CD4-positive, alpha-beta T cell (primary cell): ENCODE measurements at regions of chr5 and their contacts with region 1.

Region 1: GRCh38 chr5:126776497-126777256 is at the start of gene LMNB1:
- DNase-seq: peak; percentile 87 to 97 (median 92)
- ATAC-seq: peak; percentile 66
- H3K4me3 ChIP-seq: peak within 1 kb of the TSS; percentile 97
- H3K4me3 Mint-ChIP-seq: peak within 1 kb of the TSS; percentile 87
- H3K27ac ChIP-seq: peak within 1 kb of the TSS; percentile 77 to 96
- H3K27ac Mint-ChIP-seq: peak within 1 kb of the TSS; percentile 93
- H3K4me1 ChIP-seq: peaks cover 28% of the 10 kb centered on the region
- H3K4me1 Mint-ChIP-seq: peaks cover 23% of the 10 kb centered on the region
- H3K27me3 ChIP-seq: no peaks in the 10 kb centered on the region
- H3K27me3 Mint-ChIP-seq: no peaks in the 10 kb centered on the region
- CTCF ChIP-seq: peak; percentile 16
- total RNA-seq, gene LMNB1: 30.6 to 31.1 TPM

Region 2: DNA sequence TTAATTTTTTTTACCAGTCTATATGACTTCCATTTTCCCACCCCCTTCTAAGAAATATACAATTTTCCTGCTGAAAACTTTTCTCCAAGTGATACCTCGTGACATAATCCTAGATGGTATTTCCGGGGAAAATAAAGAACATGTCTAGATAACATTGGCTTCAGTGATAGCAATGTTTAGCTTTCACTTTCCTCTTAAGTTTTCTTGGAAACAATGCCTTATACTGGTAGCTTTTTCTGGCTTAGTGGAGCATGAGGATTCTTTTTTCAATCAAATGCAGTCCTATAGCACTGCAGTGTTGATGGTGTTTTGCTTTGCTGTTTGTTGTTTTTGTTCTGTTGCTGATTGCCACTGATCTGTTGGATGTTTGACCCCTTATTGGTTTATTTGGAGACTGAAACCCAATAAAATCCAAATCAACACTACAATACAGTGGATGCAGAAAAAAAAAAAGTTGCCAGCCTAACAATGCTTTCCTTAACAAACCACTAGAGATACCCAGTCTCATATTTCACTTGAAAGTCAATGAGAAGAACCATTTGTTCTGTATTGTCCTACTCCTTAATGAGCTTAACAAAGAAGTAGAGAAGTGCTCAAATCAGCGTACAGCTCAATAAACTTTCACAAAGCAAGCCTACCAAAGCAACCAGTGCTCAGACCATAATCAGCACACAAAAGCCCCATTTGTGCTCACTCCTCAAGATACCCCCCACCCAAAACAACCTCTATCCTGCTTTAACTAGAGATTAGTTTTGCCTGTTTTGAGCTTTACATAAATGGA is 427.6 kb before region 1 on chr5:
- CTCF ChIA-PET with region 1: no interaction called
- POLR2A ChIA-PET with region 1: interaction called, 4 read pairs
- intact Hi-C with region 1: loop called in 1 of 2 experiments (anchors 10 kb)
- DNase-seq: no peak
- ATAC-seq: no peak
- H3K4me3 ChIP-seq: no peak overlapping the region
- H3K4me3 Mint-ChIP-seq: no peak overlapping the region
- H3K27ac ChIP-seq: no peak overlapping the region
- H3K27ac Mint-ChIP-seq: no peak overlapping the region
- H3K4me1 ChIP-seq: peaks cover under 1% of the 10 kb centered on the region
- H3K4me1 Mint-ChIP-seq: peaks cover 3% of the 10 kb centered on the region
- H3K27me3 ChIP-seq: peaks cover 0 to 24% of the 10 kb centered on the region in 2 experiments
- H3K27me3 Mint-ChIP-seq: peaks cover 37% of the 10 kb centered on the region
- CTCF ChIP-seq: no peak

Region 3: DNA sequence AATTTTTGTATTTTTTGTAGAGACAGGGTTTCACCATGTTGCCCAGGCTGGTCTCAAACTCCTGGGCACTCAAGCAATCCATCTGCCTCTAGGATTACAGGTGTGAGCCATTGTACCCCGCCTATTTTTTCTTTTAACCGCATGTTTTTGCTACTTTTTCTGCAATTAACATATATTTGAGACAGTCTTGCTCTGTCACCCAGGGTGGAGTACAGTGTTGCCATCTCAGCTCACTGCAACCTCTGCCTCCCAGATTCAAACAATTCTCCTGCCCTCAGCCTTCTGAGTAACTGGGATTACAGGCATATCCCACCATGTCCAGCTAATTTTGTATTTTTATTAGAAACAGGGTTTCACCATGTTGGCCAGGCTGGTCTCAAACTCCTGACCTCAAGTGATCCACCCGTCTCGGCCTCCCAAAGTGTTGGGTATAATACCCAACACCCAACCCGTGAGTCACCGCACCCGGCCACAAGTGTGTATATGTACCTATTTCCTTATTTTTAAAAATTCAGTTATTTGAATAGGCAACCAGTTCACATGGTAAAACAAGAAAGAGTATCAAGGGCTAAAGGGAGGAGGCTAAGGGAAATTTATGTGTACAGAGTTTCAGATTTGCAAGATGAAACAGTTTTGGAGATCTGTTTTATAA is 162.6 kb before region 1 on chr5:
- CTCF ChIA-PET with region 1: no interaction called
- POLR2A ChIA-PET with region 1: no interaction called
- intact Hi-C with region 1: loop called in 1 of 2 experiments (anchors 5 kb)
- DNase-seq: no peak
- ATAC-seq: no peak
- H3K4me3 ChIP-seq: no peak overlapping the region
- H3K4me3 Mint-ChIP-seq: no peak overlapping the region
- H3K27ac ChIP-seq: no peak overlapping the region
- H3K27ac Mint-ChIP-seq: no peak overlapping the region
- H3K4me1 ChIP-seq: no peaks in the 10 kb centered on the region
- H3K4me1 Mint-ChIP-seq: peaks cover 31% of the 10 kb centered on the region
- H3K27me3 ChIP-seq: no peaks in the 10 kb centered on the region
- H3K27me3 Mint-ChIP-seq: no peaks in the 10 kb centered on the region
- CTCF ChIP-seq: no peak

Region 4: GRCh38 chr5:126745259-126745992 is 31.3 kb before region 1 on chr5:
- CTCF ChIA-PET with region 1: interaction called, 5 read pairs
- POLR2A ChIA-PET with region 1: interaction called, 23 read pairs
- intact Hi-C with region 1: loop called in 1 of 2 experiments (anchors 1 kb)
- DNase-seq: no peak
- ATAC-seq: no peak
- H3K4me3 ChIP-seq: no peak overlapping the region
- H3K4me3 Mint-ChIP-seq: no peak overlapping the region
- H3K27ac ChIP-seq: no peak overlapping the region
- H3K27ac Mint-ChIP-seq: no peak overlapping the region
- H3K4me1 ChIP-seq: peaks cover 13% of the 10 kb centered on the region
- H3K4me1 Mint-ChIP-seq: peaks cover 11% of the 10 kb centered on the region
- H3K27me3 ChIP-seq: no peaks in the 10 kb centered on the region
- H3K27me3 Mint-ChIP-seq: no peaks in the 10 kb centered on the region
- CTCF ChIP-seq: no peak

Region 5: GRCh38 chr5:126808521-126808988 is 31.9 kb after region 1 on chr5:
- CTCF ChIA-PET with region 1: interaction called, 7 read pairs
- POLR2A ChIA-PET with region 1: interaction called, 54 read pairs
- intact Hi-C with region 1: loop called in 1 of 2 experiments (anchors 5 kb)
- DNase-seq: peak in 3 of 14 experiments; percentile 42 to 52 (median 47)
- ATAC-seq: no peak
- H3K4me3 ChIP-seq: no peak overlapping the region
- H3K4me3 Mint-ChIP-seq: no peak overlapping the region
- H3K27ac ChIP-seq: no peak overlapping the region
- H3K27ac Mint-ChIP-seq: no peak overlapping the region
- H3K4me1 ChIP-seq: peaks cover 12% of the 10 kb centered on the region
- H3K4me1 Mint-ChIP-seq: peaks cover 32% of the 10 kb centered on the region
- H3K27me3 ChIP-seq: no peaks in the 10 kb centered on the region
- H3K27me3 Mint-ChIP-seq: no peaks in the 10 kb centered on the region
- CTCF ChIP-seq: peak; percentile 59

Region 6: GRCh38 chr5:126947146-126948010 is 170.7 kb after region 1 on chr5:
- CTCF ChIA-PET with region 1: no interaction called
- POLR2A ChIA-PET with region 1: no interaction called
- intact Hi-C with region 1: no loop called
- DNase-seq: no peak
- ATAC-seq: no peak
- H3K4me3 ChIP-seq: no peak overlapping the region
- H3K4me3 Mint-ChIP-seq: no peak overlapping the region
- H3K27ac ChIP-seq: no peak overlapping the region
- H3K27ac Mint-ChIP-seq: no peak overlapping the region
- H3K4me1 ChIP-seq: no peaks in the 10 kb centered on the region
- H3K4me1 Mint-ChIP-seq: no peaks in the 10 kb centered on the region
- H3K27me3 ChIP-seq: no peaks in the 10 kb centered on the region
- H3K27me3 Mint-ChIP-seq: no peaks in the 10 kb centered on the region
- CTCF ChIP-seq: no peak

Region 7: DNA sequence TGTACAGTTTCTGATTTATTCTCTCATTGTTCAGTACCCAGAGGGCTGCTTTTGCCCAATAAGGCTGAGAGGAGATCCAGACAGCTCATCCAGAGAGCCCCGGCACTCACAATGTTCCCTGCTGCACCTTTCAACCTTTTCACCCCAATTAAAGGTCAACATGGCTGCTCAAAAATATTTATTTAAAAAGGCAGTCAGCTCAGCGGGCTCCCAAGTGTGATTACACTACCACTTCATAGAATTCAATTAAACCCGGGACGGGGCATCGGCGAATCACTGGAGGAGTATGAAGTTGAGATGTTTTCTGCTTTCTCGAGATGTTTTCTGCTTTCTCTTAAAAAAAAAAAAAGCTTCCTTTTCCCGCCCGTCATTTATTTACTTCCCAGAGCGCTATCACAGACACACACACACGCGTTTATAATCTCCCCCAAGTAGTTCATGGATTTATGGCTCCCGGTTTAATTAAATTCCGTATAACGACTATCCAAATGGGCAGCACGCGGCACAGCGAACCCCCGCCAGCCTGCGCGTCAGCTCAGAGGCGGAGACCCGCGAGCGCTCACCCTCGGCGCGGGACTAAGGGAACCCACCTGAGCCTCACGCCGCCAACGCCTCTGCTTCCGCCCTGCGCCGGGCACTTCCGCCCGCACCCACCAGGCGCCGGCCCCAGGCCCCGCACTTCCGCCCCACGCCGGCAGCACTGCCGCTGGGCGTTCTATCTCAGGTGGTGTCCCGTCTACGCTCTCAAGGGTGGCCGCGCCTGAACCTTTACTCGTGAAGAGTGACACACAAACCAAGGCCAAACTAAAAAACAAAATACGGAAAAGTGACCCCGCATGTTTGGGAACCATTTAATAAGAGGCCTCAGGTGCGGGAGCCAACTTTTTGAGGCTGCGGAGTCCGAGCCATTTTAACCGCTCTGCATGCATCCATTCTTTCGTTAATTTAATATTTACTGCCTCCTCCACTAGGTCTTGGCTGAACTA is 296.5 kb after region 1 on chr5 and contains the start of gene C5orf63:
- CTCF ChIA-PET with region 1: no interaction called
- POLR2A ChIA-PET with region 1: interaction called, 18 read pairs
- intact Hi-C with region 1: no loop called
- DNase-seq: peak; percentile 31 to 84 (median 56)
- ATAC-seq: peak; percentile 93
- H3K4me3 ChIP-seq: peak within 1 kb of the TSS; percentile 62
- H3K4me3 Mint-ChIP-seq: peak within 1 kb of the TSS; percentile 92
- H3K27ac ChIP-seq: peak within 1 kb of the TSS in 1 of 2 donors; percentile 4
- H3K27ac Mint-ChIP-seq: peak within 1 kb of the TSS; percentile 85
- H3K4me1 ChIP-seq: peaks cover 10% of the 10 kb centered on the region
- H3K4me1 Mint-ChIP-seq: peaks cover 34% of the 10 kb centered on the region
- H3K27me3 ChIP-seq: no peaks in the 10 kb centered on the region
- H3K27me3 Mint-ChIP-seq: no peaks in the 10 kb centered on the region
- CTCF ChIP-seq: no peak
- total RNA-seq, gene C5orf63: 5.1 to 5.7 TPM

Region 8: DNA sequence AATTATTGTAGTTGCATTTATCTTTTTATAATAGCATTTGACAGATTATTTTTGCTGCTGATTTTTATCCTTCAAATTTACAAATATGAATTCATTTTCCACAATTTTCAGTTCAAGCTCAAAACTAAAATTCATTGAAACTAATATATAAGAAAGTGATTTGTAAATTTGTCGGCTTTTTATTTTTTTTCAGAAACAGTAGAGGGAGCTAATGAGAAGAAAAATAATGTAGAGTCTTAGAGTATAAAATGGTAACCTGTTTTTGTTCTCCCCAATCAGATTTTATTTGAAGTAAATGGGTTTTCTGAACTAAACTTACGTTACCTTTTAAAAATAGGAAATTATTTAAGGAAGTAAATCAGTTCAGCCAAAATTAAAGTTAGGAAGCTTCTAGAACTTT is 760.0 kb after region 1 on chr5:
- CTCF ChIA-PET with region 1: no interaction called
- POLR2A ChIA-PET with region 1: no interaction called
- intact Hi-C with region 1: no loop called
- DNase-seq: no peak
- ATAC-seq: no peak
- H3K4me3 ChIP-seq: no peak overlapping the region
- H3K4me3 Mint-ChIP-seq: no peak overlapping the region
- H3K27ac ChIP-seq: no peak overlapping the region
- H3K27ac Mint-ChIP-seq: no peak overlapping the region
- H3K4me1 ChIP-seq: no peaks in the 10 kb centered on the region
- H3K4me1 Mint-ChIP-seq: peaks cover 13% of the 10 kb centered on the region
- H3K27me3 ChIP-seq: no peaks in the 10 kb centered on the region
- H3K27me3 Mint-ChIP-seq: no peaks in the 10 kb centered on the region
- CTCF ChIP-seq: peak; percentile 30

Region 9: GRCh38 chr5:128706269-128706668 is 1929.6 kb after region 1 on chr5:
- CTCF ChIA-PET with region 1: no interaction called
- POLR2A ChIA-PET with region 1: no interaction called
- intact Hi-C with region 1: no loop called
- DNase-seq: no peak
- ATAC-seq: no peak
- H3K4me3 ChIP-seq: no peak overlapping the region
- H3K4me3 Mint-ChIP-seq: no peak overlapping the region
- H3K27ac ChIP-seq: no peak overlapping the region
- H3K27ac Mint-ChIP-seq: no peak overlapping the region
- H3K4me1 ChIP-seq: no peaks in the 10 kb centered on the region
- H3K4me1 Mint-ChIP-seq: no peaks in the 10 kb centered on the region
- H3K27me3 ChIP-seq: no peaks in the 10 kb centered on the region
- H3K27me3 Mint-ChIP-seq: peaks cover under 1% of the 10 kb centered on the region
- CTCF ChIP-seq: no peak